ENCODE measurements at regions of chr6 and their contacts with region 1.

Region 1: DNA sequence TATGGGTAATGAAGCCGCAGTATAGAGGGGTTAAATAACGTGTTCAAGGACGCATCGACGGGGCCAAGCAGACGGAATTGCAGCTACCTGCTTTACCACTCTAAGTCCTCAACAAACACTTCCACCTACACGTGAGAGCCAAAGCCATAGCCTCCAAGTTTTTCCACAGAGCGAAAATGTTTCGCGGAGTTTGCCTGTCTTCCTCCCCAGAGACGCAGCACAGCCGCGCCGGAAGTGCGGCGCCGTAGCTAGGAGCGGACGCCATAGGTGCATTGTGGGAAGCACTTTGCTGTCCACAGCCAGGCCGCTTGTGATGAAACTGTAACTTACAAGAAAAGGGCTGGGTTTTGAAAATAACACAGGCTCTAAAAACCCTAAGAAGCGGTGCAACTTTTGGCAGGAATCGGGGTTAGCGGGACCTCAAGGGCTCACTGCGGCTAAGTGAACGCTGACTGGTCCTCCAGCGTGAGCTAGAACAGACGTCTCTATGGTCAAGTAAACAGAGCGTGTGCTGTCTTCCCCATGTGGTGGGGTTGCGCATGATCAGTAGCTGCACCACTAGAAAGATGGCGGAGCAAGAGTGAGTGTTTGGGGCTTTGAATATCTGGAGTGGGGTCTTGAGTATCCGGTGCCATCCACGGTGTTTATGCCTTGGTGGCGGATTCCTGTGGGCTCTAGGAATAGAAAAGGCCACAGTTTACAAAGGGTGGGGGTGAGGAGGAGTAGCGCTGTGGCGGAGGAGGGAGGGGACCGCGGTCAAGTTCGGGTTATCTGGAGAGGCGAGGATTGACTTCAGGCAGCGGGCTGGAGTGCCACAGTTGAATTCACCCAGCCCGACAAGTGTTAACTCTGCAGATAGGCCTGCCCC is at the start of gene RPL7L1:
- DNase-seq: peak; percentile 38
- H3K4me3 ChIP-seq: peak within 1 kb of the TSS; percentile 83
- CTCF ChIP-seq: peak; percentile 1

Region 2: DNA sequence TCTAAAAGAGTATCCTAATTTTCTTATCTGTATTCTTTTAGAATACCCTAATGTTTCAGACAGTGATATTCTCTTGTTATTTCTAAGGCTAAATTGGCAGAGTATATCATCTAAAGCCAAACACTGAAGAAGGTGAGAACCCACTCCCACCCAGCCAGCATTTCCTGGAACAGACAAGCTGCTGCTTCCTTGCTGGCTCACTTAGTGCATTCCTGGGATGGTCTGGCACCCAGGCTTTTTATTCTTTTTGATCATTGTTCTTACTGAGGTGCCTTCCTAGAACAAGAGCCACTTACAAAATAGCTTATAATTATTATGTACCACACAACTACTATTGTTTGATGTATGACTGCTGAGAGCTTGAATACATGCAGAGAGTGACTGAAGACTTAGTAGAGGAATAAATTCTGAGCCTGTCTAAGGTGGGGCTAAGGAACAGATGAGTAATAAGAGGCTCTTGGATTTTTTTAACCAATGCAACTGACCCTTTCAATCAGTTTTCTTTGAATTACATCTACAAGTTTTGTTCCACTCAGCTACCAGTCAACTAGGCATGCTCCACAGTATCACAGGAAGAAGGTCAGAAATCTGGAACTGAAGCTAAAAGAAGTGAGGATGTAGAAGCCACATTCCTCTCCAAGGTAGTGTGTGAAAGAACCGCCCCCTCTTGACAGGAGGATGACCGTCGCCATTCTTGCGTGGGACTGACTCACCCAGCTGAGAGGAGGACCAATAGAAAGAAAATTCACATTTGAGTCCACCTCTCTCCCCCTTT is 187.3 kb before region 1 on chr6:
- CTCF ChIA-PET with region 1: interaction called, 18 read pairs
- POLR2A ChIA-PET with region 1: interaction called, 5 read pairs
- DNase-seq: no peak
- H3K4me3 ChIP-seq: no peak overlapping the region
- CTCF ChIP-seq: no peak

Region 3: DNA sequence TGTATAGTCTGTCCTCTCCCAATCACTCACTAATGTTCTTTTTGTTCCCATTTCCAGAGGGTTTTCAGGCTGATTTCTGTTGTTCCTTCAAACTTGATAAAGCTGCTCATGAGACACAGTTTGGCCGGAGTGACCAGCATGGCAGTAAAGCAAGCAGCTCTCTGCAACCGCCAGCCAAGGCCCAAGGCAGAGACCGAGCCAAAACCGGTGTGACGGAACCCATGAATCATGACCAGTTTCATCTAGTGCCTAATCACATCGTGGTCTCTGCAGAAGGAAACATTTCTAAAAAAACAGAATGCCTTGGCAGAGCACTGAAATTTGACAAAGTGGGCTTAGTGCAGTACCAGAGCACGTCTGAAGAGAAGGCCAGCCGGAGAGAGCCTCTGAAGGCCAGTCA is 15.0 kb before region 1 on chr6:
- CTCF ChIA-PET with region 1: interaction called, 15 read pairs
- POLR2A ChIA-PET with region 1: no interaction called
- DNase-seq: no peak
- H3K4me3 ChIP-seq: no peak overlapping the region
- CTCF ChIP-seq: no peak

Region 4: GRCh38 chr6:43263314-43264178 is 383.9 kb after region 1 on chr6:
- CTCF ChIA-PET with region 1: no interaction called
- POLR2A ChIA-PET with region 1: no interaction called
- DNase-seq: no peak
- H3K4me3 ChIP-seq: no peak overlapping the region
- CTCF ChIP-seq: peak; percentile 96